Endothelial cell of umbilical vein (primary cell): ENCODE measurements at regions of chr5 and their contacts with region 1.

Region 1: DNA sequence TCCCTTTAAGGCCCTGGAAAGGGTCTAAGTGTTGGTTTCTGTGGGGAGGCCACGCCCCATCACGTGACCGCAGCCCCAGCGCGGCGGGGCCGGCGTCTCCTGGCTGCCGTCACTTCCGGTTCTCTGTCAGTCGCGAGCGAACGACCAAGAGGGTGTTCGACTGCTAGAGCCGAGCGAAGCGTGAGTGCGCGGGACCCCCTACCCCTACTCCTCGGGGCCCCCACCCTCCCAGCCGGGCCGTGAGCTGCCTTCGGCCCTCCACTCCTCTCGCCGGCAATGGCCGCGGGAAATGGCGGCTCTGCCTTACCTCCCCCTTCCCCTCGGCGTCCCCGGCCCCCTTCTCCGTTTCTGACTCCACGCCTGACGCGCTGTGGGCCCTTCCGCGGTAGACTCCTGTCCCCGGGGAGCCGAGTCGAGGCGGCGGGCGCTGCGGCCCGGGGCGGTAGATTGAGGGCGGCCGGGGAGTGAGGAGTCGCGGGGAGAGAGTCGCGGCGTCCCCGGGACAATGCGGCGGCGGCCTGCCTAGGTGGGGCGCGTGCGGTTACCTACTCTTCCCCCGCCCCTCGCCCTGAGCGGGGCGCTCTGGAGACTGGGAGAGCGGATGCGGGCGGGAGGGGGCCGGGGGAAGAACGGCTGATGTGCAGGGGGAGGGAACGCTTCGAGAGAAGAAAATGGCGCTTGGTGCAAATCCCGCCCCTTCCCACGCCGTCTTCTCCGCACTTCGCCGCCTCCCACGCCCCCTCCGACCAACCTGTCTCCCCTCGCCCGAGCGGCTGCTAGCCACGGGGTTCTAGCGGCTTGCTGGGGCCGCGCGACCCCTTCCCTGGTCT is at the start of gene SUB1:
- DNase-seq: peak; percentile 93
- H3K4me3 ChIP-seq: peak within 1 kb of the TSS; percentile 89 to 99 (median 94)
- H3K27ac ChIP-seq: peak within 1 kb of the TSS; percentile 84
- H3K4me1 ChIP-seq: peaks cover 24% of the 10 kb centered on the region
- H3K27me3 ChIP-seq: no peaks in the 10 kb centered on the region
- CTCF ChIP-seq: no peak
- POLR2A ChIP-seq: peak; percentile 84
- total RNA-seq, gene SUB1: 246 and 252 TPM in 2 replicates

Region 2: GRCh38 chr5:32098291-32098690 is 487.4 kb before region 1 on chr5:
- CTCF ChIA-PET with region 1: interaction called, 5 read pairs
- POLR2A ChIA-PET with region 1: no interaction called
- dilution Hi-C with region 1: no loop called
- intact Hi-C with region 1: loop called (anchors 5 kb)
- DNase-seq: peak; percentile 96
- H3K4me3 ChIP-seq: peak overlapping the region in 1 of 3 experiments; percentile 43
- H3K27ac ChIP-seq: peak overlapping the region; percentile 96
- H3K4me1 ChIP-seq: peaks cover 45% of the 10 kb centered on the region
- H3K27me3 ChIP-seq: no peaks in the 10 kb centered on the region
- CTCF ChIP-seq: no peak
- POLR2A ChIP-seq: no peak

Region 3: GRCh38 chr5:32413466-32414263 is 172.0 kb before region 1 on chr5:
- CTCF ChIA-PET with region 1: interaction called, 34 read pairs
- POLR2A ChIA-PET with region 1: interaction called, 4 read pairs
- dilution Hi-C with region 1: no loop called
- intact Hi-C with region 1: loop called (anchors 10 kb)
- DNase-seq: peak; percentile 43
- H3K4me3 ChIP-seq: no peak overlapping the region
- H3K27ac ChIP-seq: peak overlapping the region; percentile 32
- H3K4me1 ChIP-seq: peaks cover 20% of the 10 kb centered on the region
- H3K27me3 ChIP-seq: no peaks in the 10 kb centered on the region
- CTCF ChIP-seq: no peak
- POLR2A ChIP-seq: no peak

Region 4: DNA sequence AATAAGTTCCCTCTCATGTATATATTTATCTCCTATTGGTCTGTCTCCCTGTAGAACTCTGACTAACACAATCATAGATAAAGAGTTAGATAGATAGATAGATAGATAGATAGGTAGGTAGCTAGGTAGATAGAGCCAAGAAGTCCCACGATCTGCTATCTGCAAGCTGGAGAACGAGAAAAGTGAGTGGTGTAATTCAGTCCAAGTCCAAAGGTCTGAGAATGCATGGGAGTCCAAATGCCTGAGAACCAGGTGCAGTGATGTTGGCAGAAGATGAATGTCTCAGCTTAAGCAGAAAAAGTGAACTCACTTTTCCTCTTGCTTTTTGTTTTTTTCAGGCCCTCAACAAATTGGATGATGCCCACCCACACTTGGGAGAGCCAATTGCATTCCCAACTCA is 103.5 kb before region 1 on chr5:
- CTCF ChIA-PET with region 1: interaction called, 381 read pairs
- POLR2A ChIA-PET with region 1: no interaction called
- dilution Hi-C with region 1: no loop called
- intact Hi-C with region 1: no loop called
- DNase-seq: no peak
- H3K4me3 ChIP-seq: no peak overlapping the region
- H3K27ac ChIP-seq: no peak overlapping the region
- H3K4me1 ChIP-seq: no peaks in the 10 kb centered on the region
- H3K27me3 ChIP-seq: no peaks in the 10 kb centered on the region
- CTCF ChIP-seq: no peak
- POLR2A ChIP-seq: no peak

Region 5: GRCh38 chr5:32504989-32505596 is 80.6 kb before region 1 on chr5:
- CTCF ChIA-PET with region 1: interaction called, 35 read pairs
- POLR2A ChIA-PET with region 1: interaction called, 3 read pairs
- dilution Hi-C with region 1: no loop called
- intact Hi-C with region 1: loop called (anchors 1 kb)
- DNase-seq: peak; percentile 95
- H3K4me3 ChIP-seq: no peak overlapping the region
- H3K27ac ChIP-seq: no peak overlapping the region
- H3K4me1 ChIP-seq: peaks cover 14% of the 10 kb centered on the region
- H3K27me3 ChIP-seq: peaks cover 6 to 10% of the 10 kb centered on the region in 2 experiments
- CTCF ChIP-seq: no peak
- POLR2A ChIP-seq: no peak

Region 6: DNA sequence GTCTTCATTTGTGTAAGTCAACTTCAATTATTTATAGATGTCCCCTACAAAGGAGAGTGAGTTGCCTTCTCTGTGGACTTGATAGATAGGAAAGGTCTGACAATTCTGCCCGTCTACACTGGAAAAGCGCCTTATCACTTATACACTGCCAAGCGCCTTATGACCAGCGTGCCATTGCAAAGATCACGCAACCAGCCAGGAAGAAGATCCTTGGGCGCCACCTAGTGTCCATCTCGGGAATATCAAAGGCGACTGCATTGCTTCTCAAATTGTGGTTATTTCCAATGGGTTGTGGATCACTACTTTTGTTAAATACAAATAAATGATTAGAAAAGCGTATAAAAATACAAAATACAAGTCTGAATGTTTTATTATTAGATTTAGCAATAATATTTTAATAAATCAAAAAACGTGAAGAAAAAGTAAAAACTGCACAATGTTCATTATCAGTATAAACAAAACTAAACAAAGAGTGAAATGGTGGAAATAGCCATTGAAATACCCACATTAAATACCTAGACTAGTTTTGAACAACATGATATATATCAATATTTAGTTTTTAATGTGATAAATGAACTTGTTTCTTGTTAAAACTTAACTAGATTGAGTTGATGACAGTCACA is 27.5 kb after region 1 on chr5:
- CTCF ChIA-PET with region 1: interaction called, 41 read pairs
- POLR2A ChIA-PET with region 1: no interaction called
- dilution Hi-C with region 1: no loop called
- intact Hi-C with region 1: loop called (anchors 2 kb)
- DNase-seq: peak; percentile 85
- H3K4me3 ChIP-seq: no peak overlapping the region
- H3K27ac ChIP-seq: no peak overlapping the region
- H3K4me1 ChIP-seq: peaks cover 7% of the 10 kb centered on the region
- H3K27me3 ChIP-seq: no peaks in the 10 kb centered on the region
- CTCF ChIP-seq: peak; percentile 78 to 86
- POLR2A ChIP-seq: no peak

Region 7: DNA sequence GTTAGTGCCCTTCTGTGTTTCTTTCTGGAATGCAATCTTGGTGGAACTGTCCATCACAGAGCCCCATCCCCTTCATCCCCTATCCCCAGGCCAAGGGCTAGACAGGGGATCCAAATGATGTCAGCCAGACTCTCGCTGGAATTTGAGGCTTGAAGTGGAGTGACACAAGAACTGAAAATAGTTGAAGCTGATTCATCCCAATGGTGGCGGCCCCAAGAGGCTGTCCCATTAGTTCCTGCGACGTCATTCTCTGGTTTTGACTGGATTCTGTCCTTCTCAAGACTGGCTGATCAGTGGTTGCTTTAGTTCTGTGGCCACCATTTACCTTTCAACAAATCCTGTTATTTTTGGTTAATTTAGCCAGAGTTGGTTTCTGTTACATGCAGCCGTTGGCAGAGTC is 59.6 kb after region 1 on chr5:
- CTCF ChIA-PET with region 1: no interaction called
- POLR2A ChIA-PET with region 1: no interaction called
- dilution Hi-C with region 1: no loop called
- intact Hi-C with region 1: no loop called
- DNase-seq: no peak
- H3K4me3 ChIP-seq: no peak overlapping the region
- H3K27ac ChIP-seq: no peak overlapping the region
- H3K4me1 ChIP-seq: no peaks in the 10 kb centered on the region
- H3K27me3 ChIP-seq: no peaks in the 10 kb centered on the region
- CTCF ChIP-seq: no peak
- POLR2A ChIP-seq: no peak

Region 8: GRCh38 chr5:32714836-32715235 is 129.2 kb after region 1 on chr5:
- CTCF ChIA-PET with region 1: no interaction called
- POLR2A ChIA-PET with region 1: no interaction called
- dilution Hi-C with region 1: no loop called
- intact Hi-C with region 1: no loop called
- DNase-seq: no peak
- H3K4me3 ChIP-seq: no peak overlapping the region
- H3K27ac ChIP-seq: no peak overlapping the region
- H3K4me1 ChIP-seq: peaks cover 10% of the 10 kb centered on the region
- H3K27me3 ChIP-seq: peaks cover 29 to 52% of the 10 kb centered on the region in 2 experiments
- CTCF ChIP-seq: no peak
- POLR2A ChIP-seq: no peak

Region 9: GRCh38 chr5:33272288-33272687 is 686.6 kb after region 1 on chr5:
- CTCF ChIA-PET with region 1: no interaction called
- POLR2A ChIA-PET with region 1: no interaction called
- dilution Hi-C with region 1: no loop called
- intact Hi-C with region 1: no loop called
- DNase-seq: peak; percentile 94
- H3K4me3 ChIP-seq: peak overlapping the region in 1 of 3 experiments; percentile 31
- H3K27ac ChIP-seq: peak overlapping the region; percentile 90
- H3K4me1 ChIP-seq: peaks cover 38% of the 10 kb centered on the region
- H3K27me3 ChIP-seq: no peaks in the 10 kb centered on the region
- CTCF ChIP-seq: no peak
- POLR2A ChIP-seq: no peak